ENCODE measurements at regions of chr4 and their contacts with region 1.

Region 1: DNA sequence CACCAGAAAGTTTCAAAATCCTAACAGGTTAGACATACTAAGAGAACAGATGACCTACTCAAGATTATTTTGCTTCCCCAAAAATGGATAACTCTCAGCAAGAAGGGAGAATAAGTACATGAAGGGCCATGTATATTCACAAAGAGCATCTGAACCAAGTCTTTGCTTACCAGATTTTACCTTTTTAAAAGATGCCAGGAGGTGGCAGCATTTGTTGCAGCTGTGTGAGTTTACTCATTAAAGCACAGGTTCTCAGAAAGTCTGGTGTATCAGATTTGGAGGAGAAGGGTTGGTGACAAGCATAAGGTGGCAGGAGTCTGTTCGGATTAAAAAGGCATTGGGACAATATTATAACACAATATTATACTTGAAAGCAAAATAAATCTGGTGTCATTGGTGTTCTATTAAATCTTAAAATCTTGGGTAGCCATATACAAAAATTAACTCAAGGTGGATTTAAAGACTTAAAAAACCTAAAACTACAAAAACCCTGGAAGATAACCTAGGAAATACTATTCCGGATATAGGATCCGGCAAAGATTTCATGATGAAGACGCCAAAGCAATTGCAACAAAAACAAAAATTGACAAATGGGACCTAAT is 51.3 kb upstream of the NFKB1 start:
- DNase-seq: no peak
- H3K4me3 ChIP-seq: no peak overlapping the region
- H3K27ac ChIP-seq: no peak overlapping the region
- H3K4me1 ChIP-seq: no peaks in the 10 kb centered on the region
- H3K27me3 ChIP-seq: no peaks in the 10 kb centered on the region
- CTCF ChIP-seq: peak; percentile 35 to 64 (median 44)

Region 2: GRCh38 chr4:102525097-102525496 is 75.2 kb after region 1 on chr4:
- intact Hi-C with region 1: no loop called
- DNase-seq: no peak
- H3K4me3 ChIP-seq: no peak overlapping the region
- H3K27ac ChIP-seq: no peak overlapping the region
- H3K4me1 ChIP-seq: no peaks in the 10 kb centered on the region
- H3K27me3 ChIP-seq: no peaks in the 10 kb centered on the region
- CTCF ChIP-seq: no peak

Region 3: GRCh38 chr4:102574317-102574716 is 124.5 kb after region 1 on chr4:
- intact Hi-C with region 1: no loop called
- DNase-seq: no peak
- H3K4me3 ChIP-seq: no peak overlapping the region
- H3K27ac ChIP-seq: no peak overlapping the region
- H3K4me1 ChIP-seq: no peaks in the 10 kb centered on the region
- H3K27me3 ChIP-seq: no peaks in the 10 kb centered on the region
- CTCF ChIP-seq: no peak

Region 4: DNA sequence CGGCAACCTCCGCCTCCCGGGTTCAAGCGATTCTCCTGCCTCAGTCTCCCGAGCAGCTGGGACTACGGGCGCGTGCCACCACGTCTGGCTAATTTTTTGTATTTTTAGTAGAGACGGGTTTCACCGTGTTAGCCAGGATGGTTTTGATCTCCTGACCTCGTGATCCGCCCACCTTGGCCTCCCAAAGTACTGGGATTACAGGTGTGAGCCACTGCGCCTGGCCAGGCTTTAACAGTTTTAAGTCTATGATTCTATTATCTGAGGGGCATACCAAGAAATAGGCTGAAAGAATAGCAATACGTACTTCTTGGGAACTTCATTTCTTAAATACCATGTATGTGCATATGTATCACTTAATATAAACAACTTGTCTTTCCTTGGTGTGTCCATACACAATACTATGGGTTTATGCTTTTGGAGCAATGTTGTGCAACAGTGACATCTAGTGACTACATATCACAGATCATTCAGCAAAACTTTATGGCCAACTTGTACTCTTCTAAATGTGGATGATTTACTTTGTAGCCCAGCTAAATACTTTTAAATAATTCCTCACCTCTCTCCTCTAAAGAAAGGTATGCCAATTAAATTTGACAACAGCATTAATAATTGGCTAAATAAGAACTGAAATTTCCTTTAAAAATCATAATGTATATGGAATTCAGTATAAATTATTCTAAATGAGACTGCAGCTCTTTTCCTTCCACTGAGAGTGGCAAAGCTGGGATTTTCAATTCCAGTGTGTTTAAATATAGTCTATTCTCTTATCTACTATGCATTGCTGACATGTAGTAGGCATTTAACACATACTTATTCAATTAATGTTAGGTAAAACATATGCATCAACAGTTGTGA is 559.2 kb after region 1 on chr4:
- intact Hi-C with region 1: loop called (anchors 1 kb)
- DNase-seq: no peak
- H3K4me3 ChIP-seq: no peak overlapping the region
- H3K27ac ChIP-seq: no peak overlapping the region
- H3K4me1 ChIP-seq: peaks cover 6 to 14% of the 10 kb centered on the region in 2 donors
- H3K27me3 ChIP-seq: no peaks in the 10 kb centered on the region
- CTCF ChIP-seq: peak; percentile 56 to 76 (median 59)

Measured in ascending aorta (tissue), 2 donors.